ENCODE measurements at regions of chr10 and their contacts with region 1.

Region 1: DNA sequence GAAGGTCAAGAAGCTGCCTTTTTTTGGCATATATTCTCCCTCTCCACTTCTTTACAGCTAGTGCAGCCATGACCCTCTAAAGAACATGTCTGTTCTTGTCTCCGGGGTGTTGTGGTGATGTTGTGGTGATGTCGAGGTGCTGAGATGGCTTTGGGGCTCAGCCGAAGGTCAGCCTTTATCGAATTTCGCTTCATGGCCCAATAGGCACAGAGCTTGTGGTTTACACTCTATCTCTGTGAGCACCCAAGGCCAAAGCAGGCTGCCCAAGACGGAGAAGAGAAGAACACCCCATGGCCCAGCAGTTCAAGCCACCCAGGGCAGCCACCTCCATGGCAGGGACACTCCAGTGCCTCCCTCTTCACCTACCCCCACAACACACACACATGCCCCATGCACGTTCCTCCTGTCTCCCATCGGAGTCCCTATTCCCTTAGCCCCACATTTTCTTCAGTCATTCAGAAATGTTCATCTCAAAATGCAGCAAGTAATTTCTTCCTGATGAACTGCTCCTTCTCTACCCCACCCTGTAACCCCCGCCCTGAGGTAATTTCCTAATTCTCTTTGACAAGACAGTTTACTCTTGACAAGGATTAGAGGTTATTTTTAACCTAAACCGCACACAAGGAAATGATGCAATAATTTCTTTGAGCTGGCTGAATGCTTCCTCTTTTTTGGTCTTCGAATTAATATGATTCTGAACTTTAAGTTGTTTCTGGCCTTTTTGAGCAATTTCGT is 18.6 kb upstream of the ADRB1 start:
- DNase-seq: no peak
- ATAC-seq: peak in 1 of 2 donors; percentile 44

Region 2: GRCh38 chr10:113922787-113923570 is 102.1 kb before region 1 on chr10:
- intact Hi-C with region 1: loop called in 1 of 2 experiments (anchors 10 kb)
- DNase-seq: no peak
- ATAC-seq: peak; percentile 54 to 73

Measured in left cardiac atrium (tissue), 4 donors.